Activated CD4-positive, alpha-beta T cell treated with anti-CD3 and anti-CD28 coated beads, Interleukin-2, amount 10 ng/mL, durations not matched to agents 24 days and 14 days (primary cell): ENCODE measurements at regions of chr6 and their contacts with region 1.

Region 1: DNA sequence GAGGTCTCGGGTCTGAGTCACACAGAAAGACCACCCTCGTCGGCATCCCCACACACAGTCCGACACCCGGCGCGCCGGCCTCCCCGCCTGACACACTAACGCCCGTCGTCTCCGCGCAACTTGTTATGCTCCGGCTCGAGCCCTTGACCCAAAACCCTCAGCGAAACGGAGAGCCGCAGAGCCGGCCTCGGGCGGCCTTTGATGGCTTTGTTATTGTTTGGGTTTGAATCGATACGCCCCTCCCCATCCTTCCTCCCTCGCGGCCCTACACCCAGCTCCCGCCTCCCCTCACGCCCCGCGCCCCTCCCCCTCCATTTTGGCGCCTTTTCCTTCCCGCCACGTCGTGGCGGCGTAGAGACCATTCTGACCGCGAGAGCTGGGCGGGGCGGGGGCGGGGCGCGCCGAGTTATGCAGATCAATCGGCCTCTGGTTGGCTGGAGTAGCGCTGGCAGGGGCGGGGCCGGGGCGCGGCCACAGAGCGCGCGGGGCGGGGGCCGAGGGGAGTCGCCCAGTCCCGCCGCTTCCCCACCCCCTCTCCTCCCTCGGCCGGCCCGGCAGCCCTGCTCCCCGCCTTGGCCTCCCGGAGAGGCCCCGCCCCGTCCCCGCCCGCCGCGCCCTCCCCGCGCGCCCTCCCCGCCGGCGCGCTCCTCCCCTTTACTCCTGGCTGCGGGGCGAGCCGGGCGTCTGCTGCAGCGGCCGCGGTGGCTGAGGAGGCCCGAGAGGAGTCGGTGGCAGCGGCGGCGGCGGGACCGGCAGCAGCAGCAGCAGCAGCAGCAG is at the start of gene PIM1:
- DNase-seq: peak; percentile 98
- H3K4me3 Mint-ChIP-seq: peak within 1 kb of the TSS; percentile 98
- H3K27ac Mint-ChIP-seq: peak within 1 kb of the TSS; percentile 98
- H3K4me1 Mint-ChIP-seq: peaks cover 48% of the 10 kb centered on the region
- H3K27me3 Mint-ChIP-seq: no peaks in the 10 kb centered on the region
- total RNA-seq, gene PIM1: 153 and 158 TPM in 2 replicates

Region 2: DNA sequence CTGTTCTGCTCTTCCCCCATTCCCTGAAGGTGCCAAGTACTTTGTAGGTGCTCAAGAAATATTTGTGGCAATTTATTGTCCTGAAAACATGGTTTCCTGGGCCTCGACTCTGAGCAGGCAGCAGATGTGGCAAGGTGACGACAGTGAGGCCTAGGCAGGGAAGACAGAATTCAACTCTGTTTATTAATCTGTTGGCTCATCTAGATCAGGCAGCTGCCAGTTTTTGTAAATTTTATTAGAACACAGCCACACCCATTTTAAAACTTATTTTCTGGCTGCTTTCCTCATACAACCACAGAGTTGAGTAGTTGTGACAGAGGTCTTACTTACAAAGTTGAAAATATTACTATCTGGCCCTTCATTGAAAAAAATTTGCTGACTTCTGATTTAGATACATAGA is 1117.6 kb before region 1 on chr6:
- intact Hi-C with region 1: no loop called
- DNase-seq: no peak
- H3K4me3 Mint-ChIP-seq: no peak overlapping the region
- H3K27ac Mint-ChIP-seq: no peak overlapping the region
- H3K4me1 Mint-ChIP-seq: peaks cover 7% of the 10 kb centered on the region
- H3K27me3 Mint-ChIP-seq: no peaks in the 10 kb centered on the region

Region 3: DNA sequence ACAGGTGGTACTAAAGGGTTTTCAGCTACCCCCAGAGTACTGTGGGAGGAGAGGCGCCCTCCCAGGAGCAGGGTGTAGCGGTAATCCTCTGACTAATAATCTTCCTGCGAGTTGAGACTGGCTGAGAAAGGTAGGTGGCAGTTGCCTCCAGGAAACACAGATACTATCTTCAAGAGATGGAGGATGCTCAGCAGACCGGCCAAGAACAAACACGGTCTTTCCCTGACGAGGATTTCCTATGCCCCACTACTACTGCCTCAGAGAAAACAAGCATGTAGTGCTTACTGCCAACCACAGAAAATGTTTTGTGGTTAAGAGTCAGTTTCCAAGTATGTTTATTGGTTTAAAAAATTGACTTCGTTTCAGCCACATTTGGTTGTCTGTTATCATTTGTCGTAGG is 257.1 kb before region 1 on chr6:
- intact Hi-C with region 1: loop called (anchors 2 kb)
- DNase-seq: peak; percentile 93
- H3K4me3 Mint-ChIP-seq: peak overlapping the region; percentile 82
- H3K27ac Mint-ChIP-seq: peak overlapping the region; percentile 89
- H3K4me1 Mint-ChIP-seq: peaks cover 57% of the 10 kb centered on the region
- H3K27me3 Mint-ChIP-seq: no peaks in the 10 kb centered on the region

Region 4: GRCh38 chr6:37029249-37029971 is 140.3 kb before region 1 on chr6:
- intact Hi-C with region 1: loop called (anchors 1 kb)
- DNase-seq: peak; percentile 84
- H3K4me3 Mint-ChIP-seq: peak overlapping the region; percentile 39
- H3K27ac Mint-ChIP-seq: peak overlapping the region; percentile 70
- H3K4me1 Mint-ChIP-seq: peaks cover 58% of the 10 kb centered on the region
- H3K27me3 Mint-ChIP-seq: no peaks in the 10 kb centered on the region

Region 5: GRCh38 chr6:37110500-37111461 is 58.9 kb before region 1 on chr6:
- intact Hi-C with region 1: loop called (anchors 2 kb)
- DNase-seq: peak; percentile 69
- H3K4me3 Mint-ChIP-seq: no peak overlapping the region
- H3K27ac Mint-ChIP-seq: peak overlapping the region; percentile 76
- H3K4me1 Mint-ChIP-seq: peaks cover 13% of the 10 kb centered on the region
- H3K27me3 Mint-ChIP-seq: peaks cover 2% of the 10 kb centered on the region

Region 6: GRCh38 chr6:37182736-37183590 is 13.3 kb after region 1 on chr6:
- intact Hi-C with region 1: loop called (anchors 1 kb)
- DNase-seq: peak; percentile 93
- H3K4me3 Mint-ChIP-seq: peak overlapping the region; percentile 74
- H3K27ac Mint-ChIP-seq: peak overlapping the region; percentile 98
- H3K4me1 Mint-ChIP-seq: peaks cover 55% of the 10 kb centered on the region
- H3K27me3 Mint-ChIP-seq: no peaks in the 10 kb centered on the region

Region 7: GRCh38 chr6:37257634-37258404 is 88.1 kb after region 1 on chr6 and contains the starts of genes TBC1D22B and TMEM217:
- intact Hi-C with region 1: loop called (anchors 5 kb)
- DNase-seq: peak; percentile 99
- H3K4me3 Mint-ChIP-seq: peak within 1 kb of the TSS; percentile 88
- H3K27ac Mint-ChIP-seq: peak within 1 kb of the TSS; percentile 95
- H3K4me1 Mint-ChIP-seq: peaks cover 42% of the 10 kb centered on the region
- H3K27me3 Mint-ChIP-seq: no peaks in the 10 kb centered on the region
- total RNA-seq, gene TBC1D22B: 17.2 and 18.7 TPM in 2 replicates
- total RNA-seq, gene TMEM217: 4.1 and 6.1 TPM in 2 replicates